Common myeloid progenitor, CD34-positive (primary cell): ENCODE measurements at regions of chr1 and their contacts with region 1.

Region 1: GRCh38 chr1:44721485-44722361 is 9.2 kb downstream of the RNU5D-1 start:
- DNase-seq: peak; percentile 96 to 99 (median 97)
- H3K4me3 ChIP-seq: peak overlapping the region in 4 of 7 experiments; percentile 2 to 32 (median 18)
- H3K27ac ChIP-seq: peak overlapping the region; percentile 98 to 99
- H3K4me1 ChIP-seq: peaks cover 5 to 63% (median 52%) of the 10 kb centered on the region in 4 experiments
- H3K27me3 ChIP-seq: no peaks in the 10 kb centered on the region

Region 2: DNA sequence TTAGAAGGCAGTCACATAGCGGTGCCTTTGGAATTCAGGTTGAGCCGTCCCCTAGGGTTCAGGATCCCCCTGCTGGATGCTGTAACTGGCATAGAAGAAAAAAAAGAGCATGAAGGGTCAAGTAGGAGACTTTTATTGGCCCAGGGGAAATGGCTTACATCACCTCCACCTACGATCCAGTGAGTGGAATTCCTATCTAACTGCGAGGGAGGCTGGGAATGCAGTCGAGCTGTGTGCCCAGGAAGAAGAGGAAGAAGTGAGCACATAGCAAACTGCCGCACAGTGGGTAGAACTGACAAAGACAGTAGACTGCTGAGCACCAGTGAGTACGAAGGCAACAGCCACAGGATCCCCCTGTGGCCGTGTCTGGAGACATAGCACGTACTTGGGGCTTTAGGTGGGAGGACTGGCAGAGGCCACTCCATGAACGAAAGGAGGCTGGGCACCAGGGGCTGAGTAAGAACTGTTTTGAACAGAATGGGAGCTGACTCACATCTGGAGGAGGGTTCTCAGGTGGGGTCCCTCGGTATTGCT is 237.5 kb before region 1 on chr1:
- CTCF ChIA-PET with region 1: no interaction called
- POLR2A ChIA-PET with region 1: no interaction called
- DNase-seq: peak in 2 of 3 donors; percentile 68 to 75
- H3K4me3 ChIP-seq: peak overlapping the region in 2 of 7 experiments; percentile 20 to 33
- H3K27ac ChIP-seq: peak overlapping the region in 1 of 2 experiments; percentile 89
- H3K4me1 ChIP-seq: peaks cover 26 to 63% (median 53%) of the 10 kb centered on the region in 4 experiments
- H3K27me3 ChIP-seq: no peaks in the 10 kb centered on the region

Region 3: DNA sequence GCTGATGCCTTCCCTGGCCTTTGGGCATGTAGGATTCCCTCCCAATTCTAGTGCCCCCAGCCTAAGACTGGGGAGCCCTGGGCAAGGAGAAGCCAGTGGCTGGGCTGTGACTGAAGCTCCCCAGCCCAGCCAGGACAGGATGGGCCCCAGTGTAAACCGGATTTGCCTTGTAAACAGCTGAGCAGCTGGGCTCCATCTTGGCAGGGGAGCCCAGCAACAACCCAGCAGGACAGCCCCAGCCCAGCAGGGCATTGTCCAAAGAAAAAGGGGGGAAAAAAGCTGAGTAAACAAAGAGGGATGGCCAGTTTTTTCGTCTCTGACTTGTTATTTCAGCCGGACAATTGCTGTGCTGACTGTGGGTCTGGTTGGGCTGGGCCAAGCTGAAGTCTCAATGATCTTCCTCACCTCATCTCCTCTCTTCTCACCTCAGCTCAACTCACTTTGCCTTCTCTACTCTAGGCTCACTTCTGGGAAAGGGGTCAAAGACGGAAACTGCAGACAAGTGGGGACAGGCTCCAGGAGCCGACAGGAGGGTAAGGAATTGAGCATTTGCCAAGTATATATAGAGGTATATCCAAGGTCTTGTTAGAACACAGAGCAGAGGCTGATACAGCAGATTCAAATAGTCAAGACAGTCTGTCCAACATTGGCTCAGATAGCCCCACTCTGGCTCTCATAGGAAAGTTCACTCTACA is 145.1 kb before region 1 on chr1:
- CTCF ChIA-PET with region 1: no interaction called
- POLR2A ChIA-PET with region 1: no interaction called
- DNase-seq: no peak
- H3K4me3 ChIP-seq: no peak overlapping the region
- H3K27ac ChIP-seq: no peak overlapping the region
- H3K4me1 ChIP-seq: peaks cover 0 to 10% (median 0%) of the 10 kb centered on the region in 4 experiments
- H3K27me3 ChIP-seq: no peaks in the 10 kb centered on the region

Region 4: DNA sequence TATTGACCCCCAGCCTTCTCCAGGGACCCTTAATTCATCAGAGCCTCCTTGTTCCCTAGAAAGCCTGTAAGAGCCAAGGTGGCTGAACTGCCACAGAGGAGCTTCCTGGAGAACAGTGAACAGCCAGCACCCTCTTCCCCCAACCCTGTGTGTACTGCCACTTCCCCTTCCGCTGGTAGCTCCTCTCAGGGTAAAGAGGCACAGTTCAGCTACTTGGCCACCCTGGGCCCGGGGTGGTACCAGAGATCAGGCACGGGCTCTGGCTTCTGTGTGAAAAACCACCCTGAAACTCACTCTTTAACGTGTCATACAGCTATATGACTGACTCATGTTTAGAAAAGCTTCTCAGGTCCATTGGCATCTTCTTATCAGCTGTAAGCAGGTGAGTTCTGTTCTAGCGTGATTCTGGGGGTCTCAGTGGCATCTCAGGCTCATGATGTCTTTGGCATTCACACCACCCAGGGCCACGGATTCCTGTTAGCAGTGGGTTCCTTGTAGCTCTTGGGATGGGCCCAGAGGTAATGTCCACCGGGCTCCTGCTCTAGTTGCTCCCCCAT is 24.9 kb before region 1 on chr1:
- CTCF ChIA-PET with region 1: interaction called, 4 read pairs
- POLR2A ChIA-PET with region 1: interaction called, 17 read pairs
- DNase-seq: peak in 2 of 3 donors; percentile 56 to 68
- H3K4me3 ChIP-seq: no peak overlapping the region
- H3K27ac ChIP-seq: no peak overlapping the region
- H3K4me1 ChIP-seq: peaks cover 0 to 34% (median 19%) of the 10 kb centered on the region in 4 experiments
- H3K27me3 ChIP-seq: no peaks in the 10 kb centered on the region

Region 5: GRCh38 chr1:44775078-44775929 is 53.6 kb after region 1 on chr1 and contains the start of gene RPS8:
- CTCF ChIA-PET with region 1: no interaction called
- POLR2A ChIA-PET with region 1: interaction called, 23 read pairs
- DNase-seq: peak; percentile 94 to 96 (median 95)
- H3K4me3 ChIP-seq: peak within 1 kb of the TSS; percentile 68 to 93 (median 86)
- H3K27ac ChIP-seq: peak within 1 kb of the TSS; percentile 90 to 96
- H3K4me1 ChIP-seq: peaks cover 0 to 34% (median 29%) of the 10 kb centered on the region in 4 experiments
- H3K27me3 ChIP-seq: no peaks in the 10 kb centered on the region

Region 6: GRCh38 chr1:44807262-44808062 is 85.7 kb after region 1 on chr1 and contains the start of gene DYNLT4:
- CTCF ChIA-PET with region 1: interaction called, 5 read pairs
- POLR2A ChIA-PET with region 1: interaction called, 30 read pairs
- DNase-seq: peak; percentile 92 to 95 (median 95)
- H3K4me3 ChIP-seq: peak within 1 kb of the TSS in 3 of 7 experiments; percentile 34 to 54 (median 48)
- H3K27ac ChIP-seq: peak within 1 kb of the TSS; percentile 92 to 97
- H3K4me1 ChIP-seq: peaks cover 11 to 65% (median 62%) of the 10 kb centered on the region in 4 experiments
- H3K27me3 ChIP-seq: no peaks in the 10 kb centered on the region

Region 7: DNA sequence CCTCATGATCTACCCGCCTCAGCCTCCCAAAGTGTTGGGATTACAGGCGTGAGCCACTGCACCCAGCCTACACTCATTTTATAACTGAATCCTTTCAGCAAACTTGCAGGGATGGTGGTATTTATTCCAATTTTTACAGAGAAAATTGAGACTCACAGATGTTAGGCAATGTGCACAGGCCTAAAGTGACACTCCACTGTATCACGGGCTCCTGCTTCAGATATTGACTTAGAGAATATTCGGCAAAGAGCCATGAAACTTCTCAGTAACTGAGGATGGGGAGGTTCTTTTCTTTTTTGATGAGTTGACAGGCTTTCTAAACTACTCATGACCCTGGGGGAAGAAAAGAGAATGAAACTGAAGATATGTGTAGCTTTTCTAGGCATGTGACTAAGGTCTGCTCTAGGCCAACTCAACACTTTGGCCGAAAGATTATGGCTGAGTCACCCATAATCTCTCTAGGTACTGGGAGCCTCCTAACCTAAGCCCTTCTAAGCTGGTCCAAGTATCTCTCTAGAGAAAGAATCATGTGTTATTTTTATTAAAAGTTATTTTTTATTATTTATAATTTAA is 141.2 kb after region 1 on chr1:
- CTCF ChIA-PET with region 1: no interaction called
- POLR2A ChIA-PET with region 1: no interaction called
- DNase-seq: no peak
- H3K4me3 ChIP-seq: no peak overlapping the region
- H3K27ac ChIP-seq: no peak overlapping the region
- H3K4me1 ChIP-seq: peaks cover 0 to 9% (median 1%) of the 10 kb centered on the region in 4 experiments
- H3K27me3 ChIP-seq: no peaks in the 10 kb centered on the region

Region 8: GRCh38 chr1:45011837-45012638 is 290.3 kb after region 1 on chr1 and contains the start of gene UROD:
- CTCF ChIA-PET with region 1: no interaction called
- POLR2A ChIA-PET with region 1: interaction called, 12 read pairs
- DNase-seq: peak; percentile 96 to 98 (median 98)
- H3K4me3 ChIP-seq: peak within 1 kb of the TSS; percentile 74 to 95 (median 84)
- H3K27ac ChIP-seq: peak within 1 kb of the TSS; percentile 81 to 90
- H3K4me1 ChIP-seq: peaks cover 16 to 70% (median 51%) of the 10 kb centered on the region in 4 experiments
- H3K27me3 ChIP-seq: no peaks in the 10 kb centered on the region